GM12878 (cell line): ENCODE measurements at regions of chr15 and their contacts with region 1.

Region 1: GRCh38 chr15:32664796-32665195 is 23.3 kb downstream of the SCG5 start:
- DNase-seq: no peak
- ATAC-seq: no peak
- H3K4me3 ChIP-seq: no peak overlapping the region
- H3K27ac ChIP-seq: no peak overlapping the region
- H3K4me1 ChIP-seq: no peaks in the 10 kb centered on the region
- H3K27me3 ChIP-seq: no peaks in the 10 kb centered on the region
- CTCF ChIP-seq: no peak
- EP300 ChIP-seq: no peak
- POLR2A ChIP-seq: no peak
- RAD21 ChIP-seq: no peak

Region 2: DNA sequence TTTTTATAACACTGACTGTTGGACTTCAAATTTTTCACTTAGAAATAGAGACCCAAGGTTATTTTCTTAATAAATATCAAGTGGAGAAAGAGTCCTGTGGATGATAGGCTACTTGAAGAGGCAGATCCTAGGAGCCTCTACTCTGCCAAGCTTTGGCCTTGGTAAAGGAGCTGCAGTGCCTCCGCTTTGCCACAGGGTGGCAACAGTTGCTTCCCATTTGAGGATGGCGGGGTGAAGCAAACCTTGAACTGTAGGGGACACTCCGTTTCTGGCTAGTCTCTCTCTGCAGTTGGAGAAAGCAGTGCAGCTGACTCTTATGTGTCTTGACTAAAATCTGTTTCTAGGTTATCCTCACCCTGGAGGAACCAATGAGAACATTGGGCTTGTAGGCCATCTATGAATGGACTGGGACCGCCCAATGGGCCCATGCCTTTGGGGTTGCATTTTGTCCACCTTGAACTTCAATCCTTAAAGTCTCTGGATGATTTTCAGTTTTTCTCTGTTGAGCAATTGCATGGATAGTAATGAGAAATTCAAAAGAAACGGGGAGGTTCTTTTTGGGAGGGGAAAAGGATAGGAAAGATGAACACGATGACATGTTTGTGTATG is 13.5 kb before region 1 on chr15:
- CTCF ChIA-PET with region 1: interaction called, 34 read pairs
- POLR2A ChIA-PET with region 1: interaction called, 3 read pairs
- RAD21 ChIA-PET with region 1: interaction called, 7 read pairs
- SMC1A ChIA-PET with region 1: interaction called, 22 read pairs
- in situ Hi-C with region 1: no loop called
- intact Hi-C with region 1: no loop called
- DNase-seq: no peak
- ATAC-seq: peak; percentile 99
- H3K4me3 ChIP-seq: no peak overlapping the region
- H3K27ac ChIP-seq: no peak overlapping the region
- H3K4me1 ChIP-seq: no peaks in the 10 kb centered on the region
- H3K27me3 ChIP-seq: no peaks in the 10 kb centered on the region
- CTCF ChIP-seq: peak; percentile 90 to 94 (median 90)
- EP300 ChIP-seq: no peak
- POLR2A ChIP-seq: no peak
- RAD21 ChIP-seq: peak; percentile 65

Region 3: DNA sequence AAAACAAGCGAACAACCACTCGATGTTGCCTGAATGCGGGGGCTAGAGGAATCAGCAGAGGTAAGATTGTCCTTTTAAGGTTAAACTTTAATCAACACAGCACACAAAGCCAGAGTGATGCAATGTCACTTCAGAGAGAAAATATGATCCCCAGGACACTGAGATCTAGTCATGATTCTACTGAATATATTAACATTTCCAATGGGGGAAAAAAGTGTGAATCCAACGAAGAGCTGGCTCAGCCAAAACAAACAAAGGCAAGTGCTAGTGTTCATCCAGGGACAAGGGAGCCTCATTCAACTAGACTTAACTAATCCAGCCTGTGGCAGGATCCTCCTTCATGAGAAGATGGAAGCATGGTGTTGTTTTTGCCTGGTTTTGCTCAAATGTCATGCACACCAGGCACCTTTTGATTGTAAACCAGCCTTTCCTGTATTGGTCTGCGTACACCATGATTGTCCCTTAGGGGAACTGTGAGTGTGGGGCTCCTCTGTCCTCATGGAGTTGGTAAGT is 12.5 kb after region 1 on chr15:
- CTCF ChIA-PET with region 1: interaction called, 16 read pairs
- POLR2A ChIA-PET with region 1: no interaction called
- RAD21 ChIA-PET with region 1: no interaction called
- SMC1A ChIA-PET with region 1: interaction called, 5 read pairs
- in situ Hi-C with region 1: no loop called
- intact Hi-C with region 1: no loop called
- DNase-seq: no peak
- ATAC-seq: no peak
- H3K4me3 ChIP-seq: no peak overlapping the region
- H3K27ac ChIP-seq: no peak overlapping the region
- H3K4me1 ChIP-seq: no peaks in the 10 kb centered on the region
- H3K27me3 ChIP-seq: peaks cover 0 to 2% of the 10 kb centered on the region in 2 experiments; a peak in 1 of 4 replicates
- CTCF ChIP-seq: no peak
- EP300 ChIP-seq: no peak
- POLR2A ChIP-seq: no peak
- RAD21 ChIP-seq: no peak

Region 4: DNA sequence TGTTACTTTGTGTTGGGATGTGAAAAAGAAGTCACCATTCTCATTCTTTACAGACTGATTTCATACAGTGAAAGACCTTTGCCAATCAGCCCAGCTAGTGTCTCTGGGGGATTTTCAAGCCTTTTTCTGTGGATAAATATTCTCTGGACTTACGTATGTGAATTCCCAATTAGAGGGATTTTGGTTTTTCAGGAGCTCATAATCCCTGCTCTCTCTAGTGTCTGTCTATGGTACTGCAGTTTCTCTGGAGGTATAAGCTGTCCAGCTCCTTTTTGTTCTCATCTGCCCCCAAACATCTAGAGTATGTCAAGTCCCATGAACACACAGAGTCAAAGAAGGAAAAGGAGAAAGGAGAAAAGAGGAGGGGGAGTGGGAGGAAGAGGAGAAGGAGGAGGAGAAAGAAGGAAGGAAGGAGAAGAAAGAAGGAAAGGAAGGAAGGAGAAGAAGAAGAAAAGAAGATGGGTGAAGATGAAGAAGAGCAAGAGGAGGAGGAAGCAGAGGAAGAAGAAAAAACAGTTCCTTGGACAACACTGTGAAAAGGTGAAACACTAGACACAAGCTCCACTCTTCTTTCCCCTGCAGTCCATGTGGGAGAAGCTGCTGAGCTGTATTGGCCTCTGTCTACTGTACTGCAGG is 271.6 kb after region 1 on chr15:
- CTCF ChIA-PET with region 1: interaction called, 25 read pairs
- POLR2A ChIA-PET with region 1: no interaction called
- RAD21 ChIA-PET with region 1: interaction called, 7 read pairs
- SMC1A ChIA-PET with region 1: interaction called, 6 read pairs
- in situ Hi-C with region 1: no loop called
- intact Hi-C with region 1: no loop called
- DNase-seq: no peak
- ATAC-seq: peak; percentile 56; the same call in 2 of the 3 replicates
- H3K4me3 ChIP-seq: no peak overlapping the region
- H3K27ac ChIP-seq: no peak overlapping the region
- H3K4me1 ChIP-seq: no peaks in the 10 kb centered on the region
- H3K27me3 ChIP-seq: peaks cover 0 to 2% of the 10 kb centered on the region in 2 experiments; a peak in 1 of 4 replicates
- CTCF ChIP-seq: peak; percentile 53 to 67 (median 66); a peak in 5 of 6 replicates
- EP300 ChIP-seq: no peak
- POLR2A ChIP-seq: no peak
- RAD21 ChIP-seq: peak; percentile 53

Region 5: GRCh38 chr15:32956006-32956405 is 291.2 kb after region 1 on chr15:
- CTCF ChIA-PET with region 1: interaction called, 34 read pairs
- POLR2A ChIA-PET with region 1: no interaction called
- RAD21 ChIA-PET with region 1: interaction called, 3 read pairs
- SMC1A ChIA-PET with region 1: interaction called, 7 read pairs
- in situ Hi-C with region 1: loop called (anchors 10 kb)
- intact Hi-C with region 1: loop called (anchors 1 kb)
- DNase-seq: no peak
- ATAC-seq: peak; percentile 62; the same call in 2 of the 3 replicates
- H3K4me3 ChIP-seq: no peak overlapping the region
- H3K27ac ChIP-seq: no peak overlapping the region
- H3K4me1 ChIP-seq: no peaks in the 10 kb centered on the region
- H3K27me3 ChIP-seq: no peaks in the 10 kb centered on the region
- CTCF ChIP-seq: peak; percentile 49 to 62 (median 58); a peak in 5 of 6 replicates
- EP300 ChIP-seq: no peak
- POLR2A ChIP-seq: no peak
- RAD21 ChIP-seq: peak; percentile 65

Region 6: DNA sequence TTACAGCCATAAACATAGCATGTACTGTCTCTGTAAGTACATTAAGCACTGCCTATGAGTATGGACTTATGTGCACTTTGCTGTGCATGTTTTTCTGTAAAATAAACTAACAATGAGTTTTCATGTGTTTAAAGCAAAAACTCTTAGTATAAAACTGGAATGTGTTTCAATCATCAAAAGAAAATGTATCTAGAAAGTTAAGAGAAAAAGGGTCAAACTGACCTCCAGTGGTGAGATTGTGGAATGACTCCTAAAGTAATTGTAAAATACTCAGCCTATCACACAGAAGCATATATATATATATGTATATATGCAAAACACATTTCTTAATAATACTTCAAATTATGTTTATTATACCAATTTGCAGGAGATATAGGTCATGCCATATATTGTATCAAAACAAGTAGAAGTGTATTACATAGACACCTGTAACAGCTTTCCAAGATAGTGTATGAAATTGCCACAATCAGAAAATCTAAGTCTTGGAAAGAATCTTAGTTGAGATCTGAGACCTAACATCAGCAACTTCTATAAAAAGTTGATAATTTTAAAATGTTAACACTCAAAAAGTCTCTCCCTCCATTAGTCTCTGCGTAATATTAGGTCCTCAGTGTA is 330.1 kb after region 1 on chr15:
- CTCF ChIA-PET with region 1: interaction called, 91 read pairs
- POLR2A ChIA-PET with region 1: no interaction called
- RAD21 ChIA-PET with region 1: interaction called, 31 read pairs
- SMC1A ChIA-PET with region 1: interaction called, 18 read pairs
- in situ Hi-C with region 1: loop called (anchors 5 kb)
- intact Hi-C with region 1: loop called (anchors 1 kb)
- DNase-seq: no peak
- ATAC-seq: peak; percentile 57; the same call in 2 of the 3 replicates
- H3K4me3 ChIP-seq: no peak overlapping the region
- H3K27ac ChIP-seq: no peak overlapping the region
- H3K4me1 ChIP-seq: no peaks in the 10 kb centered on the region
- H3K27me3 ChIP-seq: peaks cover 0 to 3% of the 10 kb centered on the region in 2 experiments; a peak in 1 of 4 replicates
- CTCF ChIP-seq: peak; percentile 32 to 64 (median 47); a peak in 4 of 6 replicates
- EP300 ChIP-seq: no peak
- POLR2A ChIP-seq: no peak
- RAD21 ChIP-seq: peak; percentile 60

Region 7: GRCh38 chr15:33132722-33133345 is 468.0 kb after region 1 on chr15:
- CTCF ChIA-PET with region 1: no interaction called
- POLR2A ChIA-PET with region 1: no interaction called
- RAD21 ChIA-PET with region 1: interaction called, 3 read pairs
- SMC1A ChIA-PET with region 1: no interaction called
- in situ Hi-C with region 1: no loop called
- intact Hi-C with region 1: loop called (anchors 2 kb)
- DNase-seq: no peak
- ATAC-seq: peak; percentile 55
- H3K4me3 ChIP-seq: no peak overlapping the region
- H3K27ac ChIP-seq: no peak overlapping the region
- H3K4me1 ChIP-seq: no peaks in the 10 kb centered on the region
- H3K27me3 ChIP-seq: no peaks in the 10 kb centered on the region; a peak in 2 of 4 replicates
- CTCF ChIP-seq: peak; percentile 40 to 46 (median 42); a peak in 4 of 6 replicates
- EP300 ChIP-seq: no peak
- POLR2A ChIP-seq: no peak
- RAD21 ChIP-seq: peak; percentile 61